ENCODE measurements at regions of chr11 and their contacts with region 1.

Region 1: GRCh38 chr11:819943-820649 is 1.4 kb downstream of the PNPLA2 start:
- DNase-seq: peak in 7 of 10 donors; percentile 55 to 81 (median 73)
- H3K4me3 ChIP-seq: peak overlapping the region; percentile 37 to 98 (median 85)
- H3K27ac ChIP-seq: peak overlapping the region in 57 of 59 donors; percentile 28 to 93 (median 84)
- H3K27me3 ChIP-seq: no peaks in the 10 kb centered on the region
- CTCF ChIP-seq: no peak

Region 2: DNA sequence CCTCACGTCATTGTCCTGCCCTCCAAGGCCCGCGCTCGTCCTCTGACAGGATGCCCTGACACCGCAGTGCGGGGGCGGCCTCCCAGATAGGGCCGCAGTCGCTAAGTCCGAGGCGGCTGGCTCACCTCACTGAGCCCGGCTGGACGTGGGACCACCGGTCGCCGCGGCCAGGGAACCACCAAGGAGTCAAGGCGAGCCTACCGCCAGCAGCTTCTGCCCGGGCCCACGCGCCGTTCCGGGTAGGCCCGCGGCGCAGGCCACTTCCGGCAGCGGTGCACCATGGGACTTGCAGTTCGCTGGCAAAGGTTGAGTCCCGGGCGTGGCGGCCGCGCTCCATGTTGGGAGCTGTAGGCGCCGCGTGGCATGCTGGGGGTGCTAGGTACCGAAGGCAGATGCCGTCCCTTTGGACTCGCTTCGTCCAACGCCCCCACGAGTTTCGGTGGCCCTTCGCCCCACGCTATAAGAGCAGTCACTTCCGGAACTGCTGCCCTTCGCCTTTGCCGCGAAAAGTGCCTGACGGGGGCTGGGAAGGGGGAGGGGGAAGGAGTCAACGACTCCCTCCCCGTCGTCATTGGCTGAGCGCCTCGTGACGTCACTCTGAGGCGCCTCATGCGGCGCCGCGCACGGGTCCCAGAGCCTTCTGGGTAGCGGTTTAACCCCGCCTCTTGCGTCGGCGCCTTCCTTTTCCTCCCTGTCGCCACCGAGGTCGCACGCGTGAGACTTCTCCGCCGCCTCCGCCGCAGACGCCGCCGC is 10.6 kb before region 1 on chr11 and contains the start of gene RPLP2:
- intact Hi-C with region 1: loop called in 1 of 2 experiments (anchors 1 kb)
- DNase-seq: peak; percentile 95 to 98 (median 97)
- H3K4me3 ChIP-seq: peak within 1 kb of the TSS; percentile 68 to 100 (median 98)
- H3K27ac ChIP-seq: peak within 1 kb of the TSS; percentile 81 to 100 (median 98)
- H3K27me3 ChIP-seq: no peaks in the 10 kb centered on the region
- CTCF ChIP-seq: peak in 14 of 56 donors; percentile 1 to 47 (median 18)
- total RNA-seq, gene RPLP2: 332 to 619 (median 470) TPM

Measured in dorsolateral prefrontal cortex (tissue), 120 donors.